ENCODE measurements at regions of chr2 and their contacts with region 1.

Region 1: DNA sequence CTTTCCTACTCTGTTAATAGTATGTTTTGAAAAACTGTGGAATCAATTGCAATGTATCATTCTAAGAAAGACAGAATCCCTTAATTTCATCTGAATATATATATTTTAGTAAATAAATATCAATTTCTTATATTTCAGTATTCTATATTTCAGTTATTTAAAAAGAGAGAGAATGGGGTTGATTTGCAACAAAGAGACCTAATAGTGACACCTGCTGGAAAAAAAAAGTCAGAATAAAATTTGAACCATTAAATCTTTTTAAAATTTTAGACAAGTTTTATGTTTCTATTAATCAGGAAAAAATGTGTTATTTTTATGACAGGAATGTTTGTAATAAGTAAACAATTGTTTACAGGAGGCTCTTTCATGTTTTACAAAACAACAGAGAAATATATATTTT is 20.7 kb upstream of the CCNT2 start:
- DNase-seq: peak; percentile 6
- H3K4me3 Mint-ChIP-seq: no peak overlapping the region
- H3K27ac Mint-ChIP-seq: no peak overlapping the region
- H3K4me1 Mint-ChIP-seq: peaks cover 4% of the 10 kb centered on the region
- H3K27me3 Mint-ChIP-seq: no peaks in the 10 kb centered on the region
- CTCF ChIP-seq: peak; percentile 35

Region 2: DNA sequence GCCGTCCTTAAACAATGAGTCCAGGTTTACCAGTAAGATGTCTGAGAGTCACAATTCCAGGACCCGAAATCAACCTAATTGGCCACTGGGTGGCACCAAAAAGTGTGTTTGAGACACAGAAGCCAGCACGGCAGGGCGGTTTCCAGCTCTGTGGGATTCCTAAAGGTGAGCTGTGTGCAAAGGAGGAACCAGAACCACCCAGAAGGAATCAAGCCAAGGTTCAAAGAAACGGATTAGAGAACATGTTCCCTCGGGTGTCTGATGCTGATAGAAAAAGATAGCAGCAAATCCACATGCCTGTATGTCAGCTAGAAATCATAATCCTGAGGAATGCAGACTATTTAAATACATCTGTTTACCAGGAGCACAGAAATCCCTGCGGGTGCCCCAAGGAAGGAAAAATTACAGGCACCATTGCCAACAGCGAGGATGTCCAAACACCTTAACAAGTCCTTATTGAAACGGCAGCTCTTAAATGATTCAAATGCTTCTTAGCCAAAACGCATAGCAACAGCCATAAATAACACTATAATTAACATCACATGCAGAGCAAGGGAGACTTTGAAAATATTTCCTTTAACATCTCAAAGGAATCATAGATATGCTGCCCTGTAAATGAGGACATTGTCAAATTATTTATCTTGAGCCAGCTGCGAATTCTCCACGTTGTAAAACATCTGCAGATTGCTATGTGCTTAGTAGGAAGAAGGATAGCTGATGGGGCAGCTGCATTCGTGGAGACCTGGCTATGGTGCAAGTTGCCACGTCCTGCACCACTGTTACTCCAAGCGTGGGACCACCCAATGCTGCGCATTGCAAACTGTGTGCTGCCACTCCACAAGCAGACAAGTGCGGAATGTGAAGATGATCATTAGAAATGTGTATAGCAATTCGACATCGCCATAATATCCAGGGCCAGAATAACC is 1010.9 kb before region 1 on chr2:
- CTCF ChIA-PET with region 1: no interaction called
- POLR2A ChIA-PET with region 1: no interaction called
- intact Hi-C with region 1: loop called (anchors 5 kb)
- DNase-seq: peak; percentile 87
- H3K4me3 Mint-ChIP-seq: no peak overlapping the region
- H3K27ac Mint-ChIP-seq: no peak overlapping the region
- H3K4me1 Mint-ChIP-seq: peaks cover 7% of the 10 kb centered on the region
- H3K27me3 Mint-ChIP-seq: peaks cover 14% of the 10 kb centered on the region
- CTCF ChIP-seq: peak; percentile 52

Region 3: GRCh38 chr2:134460583-134460998 is 437.3 kb before region 1 on chr2:
- CTCF ChIA-PET with region 1: interaction called, 41 read pairs
- POLR2A ChIA-PET with region 1: no interaction called
- intact Hi-C with region 1: loop called (anchors 1 kb)
- DNase-seq: peak; percentile 63
- H3K4me3 Mint-ChIP-seq: no peak overlapping the region
- H3K27ac Mint-ChIP-seq: no peak overlapping the region
- H3K4me1 Mint-ChIP-seq: peaks cover 8% of the 10 kb centered on the region
- H3K27me3 Mint-ChIP-seq: no peaks in the 10 kb centered on the region
- CTCF ChIP-seq: peak; percentile 79

Region 4: DNA sequence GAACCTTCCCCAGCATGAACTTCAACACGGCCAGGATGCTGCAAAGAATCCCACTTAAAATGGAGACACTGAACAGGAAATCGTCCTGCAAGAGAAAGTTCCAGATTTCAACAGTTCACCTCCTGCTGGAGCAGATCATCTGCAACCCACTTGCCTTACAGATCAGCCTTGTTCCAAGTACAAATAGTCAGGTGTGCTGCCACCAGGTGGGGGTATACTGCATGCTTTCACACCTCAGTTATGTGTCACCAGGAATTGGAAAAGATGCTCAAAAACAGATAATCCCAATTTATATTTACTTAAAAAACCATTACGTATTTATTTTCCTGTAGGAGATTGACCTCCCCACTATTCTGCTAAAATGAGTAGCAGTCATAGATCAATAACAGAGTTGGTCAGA is 431.8 kb before region 1 on chr2:
- CTCF ChIA-PET with region 1: interaction called, 41 read pairs
- POLR2A ChIA-PET with region 1: no interaction called
- intact Hi-C with region 1: loop called (anchors 1 kb)
- DNase-seq: peak; percentile 53
- H3K4me3 Mint-ChIP-seq: no peak overlapping the region
- H3K27ac Mint-ChIP-seq: no peak overlapping the region
- H3K4me1 Mint-ChIP-seq: peaks cover 5% of the 10 kb centered on the region
- H3K27me3 Mint-ChIP-seq: no peaks in the 10 kb centered on the region
- CTCF ChIP-seq: peak; percentile 23

Region 5: GRCh38 chr2:134660626-134661402 is 237.1 kb before region 1 on chr2:
- CTCF ChIA-PET with region 1: interaction called, 4 read pairs
- POLR2A ChIA-PET with region 1: no interaction called
- intact Hi-C with region 1: loop called (anchors 1 kb)
- DNase-seq: no peak
- H3K4me3 Mint-ChIP-seq: no peak overlapping the region
- H3K27ac Mint-ChIP-seq: no peak overlapping the region
- H3K4me1 Mint-ChIP-seq: no peaks in the 10 kb centered on the region
- H3K27me3 Mint-ChIP-seq: peaks cover 11% of the 10 kb centered on the region
- CTCF ChIP-seq: no peak

Region 6: GRCh38 chr2:134727385-134727784 is 170.5 kb before region 1 on chr2:
- CTCF ChIA-PET with region 1: no interaction called
- POLR2A ChIA-PET with region 1: no interaction called
- intact Hi-C with region 1: loop called (anchors 10 kb)
- DNase-seq: peak; percentile 31
- H3K4me3 Mint-ChIP-seq: no peak overlapping the region
- H3K27ac Mint-ChIP-seq: no peak overlapping the region
- H3K4me1 Mint-ChIP-seq: no peaks in the 10 kb centered on the region
- H3K27me3 Mint-ChIP-seq: no peaks in the 10 kb centered on the region
- CTCF ChIP-seq: no peak

Region 7: DNA sequence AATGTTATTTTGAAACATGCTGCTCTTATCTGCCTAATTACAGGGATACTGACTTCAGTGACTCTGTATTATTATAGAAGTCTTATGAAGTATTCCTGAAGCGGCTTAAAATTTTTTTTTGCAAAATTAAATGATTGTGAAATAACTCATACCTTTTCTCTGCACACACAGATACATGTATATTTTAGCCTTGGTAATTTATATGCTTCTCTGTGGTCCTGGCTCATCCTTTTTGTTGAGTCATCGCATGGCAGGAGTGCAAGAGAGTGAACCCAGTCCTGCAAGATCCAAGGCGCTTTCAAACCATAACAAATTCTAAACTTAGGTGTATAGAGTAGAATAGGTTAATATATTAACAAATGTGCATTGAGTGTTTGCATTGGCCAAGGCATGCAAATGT is 29.3 kb after region 1 on chr2:
- CTCF ChIA-PET with region 1: no interaction called
- POLR2A ChIA-PET with region 1: no interaction called
- intact Hi-C with region 1: no loop called
- DNase-seq: peak; percentile 69
- H3K4me3 Mint-ChIP-seq: no peak overlapping the region
- H3K27ac Mint-ChIP-seq: no peak overlapping the region
- H3K4me1 Mint-ChIP-seq: peaks cover 38% of the 10 kb centered on the region
- H3K27me3 Mint-ChIP-seq: no peaks in the 10 kb centered on the region
- CTCF ChIP-seq: no peak